Cardiac septum (tissue), 1 donor: ENCODE measurements at regions of chr10 and their contacts with region 1.

Region 1: DNA sequence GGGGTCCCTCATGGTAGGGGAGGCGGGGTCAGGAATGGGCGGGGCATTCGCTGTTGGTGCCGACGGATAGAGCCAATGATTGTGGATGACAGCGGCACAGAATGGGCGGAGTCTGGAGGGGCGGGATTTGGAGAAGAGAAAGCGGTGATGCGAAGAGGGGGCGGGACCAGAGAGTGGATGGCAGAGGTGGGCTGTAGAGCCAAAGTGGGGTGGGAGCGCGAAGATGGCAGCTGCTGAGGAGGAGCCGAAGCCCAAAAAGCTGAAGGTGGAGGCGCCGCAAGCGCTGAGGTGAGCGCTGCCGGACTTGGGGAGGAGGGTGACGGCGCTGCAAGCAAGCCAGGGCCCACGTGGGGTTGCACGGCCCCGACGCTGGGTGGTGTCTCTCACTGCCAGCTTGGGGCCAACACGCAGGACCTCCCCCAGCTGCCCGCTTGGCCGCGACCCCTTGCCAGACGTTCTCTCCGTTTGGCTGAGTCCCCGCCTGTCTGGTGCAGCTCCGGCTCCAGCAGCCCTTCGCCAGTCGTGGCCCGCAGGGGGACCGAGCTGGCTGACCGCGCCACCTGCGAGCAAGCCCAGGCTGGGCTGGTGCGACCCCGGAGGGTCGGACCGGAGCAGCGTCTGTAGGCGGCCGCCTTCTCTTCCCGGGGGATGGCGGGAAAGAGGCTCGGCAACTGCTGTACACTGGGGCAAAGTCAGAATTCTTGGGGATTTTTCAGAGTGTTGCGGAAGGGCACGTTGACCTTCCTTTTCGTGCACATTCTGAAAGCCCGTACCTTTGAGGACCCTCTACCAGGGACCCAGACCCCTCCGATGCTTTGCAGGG is at the start of gene ADK:
- DNase-seq: peak; percentile 100
- total RNA-seq, gene ADK: 28.0 TPM

Region 2: GRCh38 chr10:74176380-74177139 is 25.3 kb after region 1 on chr10:
- intact Hi-C with region 1: loop called (anchors 2 kb)
- DNase-seq: peak; percentile 97